ENCODE measurements at regions of chr12 and their contacts with region 1.

Region 1: GRCh38 chr12:101773650-101774162 is 34.4 kb upstream of the SYCP3 start:
- DNase-seq: peak; percentile 56
- ATAC-seq: peak; percentile 89
- H3K4me3 Mint-ChIP-seq: no peak overlapping the region
- H3K27ac Mint-ChIP-seq: no peak overlapping the region
- H3K4me1 Mint-ChIP-seq: no peaks in the 10 kb centered on the region
- H3K27me3 Mint-ChIP-seq: no peaks in the 10 kb centered on the region
- CTCF ChIP-seq: peak; percentile 89

Region 2: DNA sequence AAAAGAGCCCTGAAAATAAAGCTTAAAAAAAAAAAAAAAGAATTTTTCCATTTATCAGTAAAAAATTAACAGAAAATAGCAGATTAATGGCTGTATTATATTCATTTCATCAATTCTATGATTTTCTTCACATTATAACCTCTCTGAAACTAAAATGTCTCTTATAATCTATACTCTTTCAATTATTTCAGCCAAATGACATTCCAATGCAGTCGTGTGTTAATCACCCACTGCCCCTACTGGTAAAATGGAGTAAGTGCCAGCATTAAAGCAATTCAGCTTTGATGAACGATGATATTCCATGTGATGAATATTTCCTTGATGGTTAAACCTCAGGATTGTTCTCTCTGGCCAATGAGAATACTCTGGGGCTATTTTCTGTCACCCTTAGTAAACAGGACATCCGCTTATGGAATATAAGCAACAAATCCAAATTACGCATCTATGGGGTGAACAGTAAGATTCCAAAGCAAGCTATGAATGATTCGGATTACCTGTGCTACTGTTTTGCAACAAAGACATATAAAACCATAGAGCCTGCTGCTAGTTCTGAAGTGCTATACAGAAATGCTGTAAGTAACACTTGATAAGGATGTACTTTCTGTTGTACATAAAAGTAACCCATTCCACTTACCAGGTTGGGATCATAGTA is 14.2 kb before region 1 on chr12:
- CTCF ChIA-PET with region 1: interaction called, 20 read pairs
- POLR2A ChIA-PET with region 1: no interaction called
- DNase-seq: no peak
- ATAC-seq: peak; percentile 68; the same call in 1 of the 2 replicates
- H3K4me3 Mint-ChIP-seq: no peak overlapping the region
- H3K27ac Mint-ChIP-seq: no peak overlapping the region
- H3K4me1 Mint-ChIP-seq: peaks cover 8% of the 10 kb centered on the region
- H3K27me3 Mint-ChIP-seq: no peaks in the 10 kb centered on the region
- CTCF ChIP-seq: peak; percentile 42

Region 3: GRCh38 chr12:101823891-101824290 is 50.2 kb after region 1 on chr12:
- CTCF ChIA-PET with region 1: interaction called, 71 read pairs
- POLR2A ChIA-PET with region 1: no interaction called
- DNase-seq: peak; percentile 54
- ATAC-seq: peak; percentile 89
- H3K4me3 Mint-ChIP-seq: no peak overlapping the region
- H3K27ac Mint-ChIP-seq: peak overlapping the region; percentile 72
- H3K4me1 Mint-ChIP-seq: peaks cover 62% of the 10 kb centered on the region
- H3K27me3 Mint-ChIP-seq: no peaks in the 10 kb centered on the region
- CTCF ChIP-seq: no peak

Region 4: DNA sequence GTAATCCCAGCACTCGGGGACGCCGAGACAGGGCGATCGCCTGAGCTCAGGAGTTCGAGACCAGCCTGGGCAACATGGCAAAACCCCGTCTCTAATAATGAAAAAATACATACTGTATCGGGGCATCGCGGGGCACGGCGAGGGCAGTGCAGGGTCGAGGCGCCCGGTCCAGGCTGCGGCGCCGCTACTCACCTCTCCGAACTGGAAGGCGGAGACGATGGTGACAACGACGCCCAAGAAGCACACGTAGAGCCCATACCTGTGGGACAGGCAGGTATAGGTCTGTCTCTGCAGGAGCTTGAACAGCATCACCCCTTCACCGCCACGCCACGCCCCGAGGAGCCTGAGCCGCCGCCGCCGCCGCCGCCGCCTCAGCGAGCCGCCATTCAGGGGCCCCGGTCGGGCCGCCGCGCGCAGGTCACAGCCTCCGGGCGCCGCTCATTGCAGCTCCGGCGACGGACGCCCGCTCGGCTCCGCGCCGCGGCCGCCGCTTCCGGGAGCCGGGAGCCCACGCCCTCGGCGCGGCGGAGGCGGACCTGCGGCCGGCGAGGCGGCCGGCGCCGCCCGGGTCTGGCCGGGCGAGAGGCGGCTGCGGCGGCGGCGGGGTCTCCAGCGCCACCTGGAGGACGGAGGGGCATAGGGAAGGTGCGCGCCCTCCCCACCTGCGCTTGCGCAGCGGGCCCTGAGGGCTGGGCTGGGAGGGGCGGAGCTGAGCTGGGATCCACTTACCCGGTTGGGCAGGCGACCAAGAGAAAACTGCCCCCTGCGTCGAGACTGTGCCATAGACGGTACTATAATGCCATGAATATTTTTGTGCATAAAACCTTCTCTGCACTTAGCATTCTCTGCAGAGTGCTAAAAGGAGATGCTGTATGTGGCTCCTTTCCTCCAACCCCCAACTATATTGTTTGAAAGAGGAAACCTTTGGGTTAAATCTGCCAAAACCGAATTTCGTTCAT is 56.9 kb after region 1 on chr12 and contains the start of gene GNPTAB:
- CTCF ChIA-PET with region 1: interaction called, 71 read pairs
- POLR2A ChIA-PET with region 1: interaction called, 4 read pairs
- DNase-seq: peak; percentile 92
- ATAC-seq: peak; percentile 94
- H3K4me3 Mint-ChIP-seq: peak within 1 kb of the TSS; percentile 96
- H3K27ac Mint-ChIP-seq: peak within 1 kb of the TSS; percentile 60; the same call in 1 of the 2 replicates
- H3K4me1 Mint-ChIP-seq: peaks cover 31% of the 10 kb centered on the region
- H3K27me3 Mint-ChIP-seq: no peaks in the 10 kb centered on the region
- CTCF ChIP-seq: peak; percentile 67
- total RNA-seq, gene GNPTAB: 22.5 to 25.4 TPM (median 24.4 TPM) in 3 replicates

Region 5: DNA sequence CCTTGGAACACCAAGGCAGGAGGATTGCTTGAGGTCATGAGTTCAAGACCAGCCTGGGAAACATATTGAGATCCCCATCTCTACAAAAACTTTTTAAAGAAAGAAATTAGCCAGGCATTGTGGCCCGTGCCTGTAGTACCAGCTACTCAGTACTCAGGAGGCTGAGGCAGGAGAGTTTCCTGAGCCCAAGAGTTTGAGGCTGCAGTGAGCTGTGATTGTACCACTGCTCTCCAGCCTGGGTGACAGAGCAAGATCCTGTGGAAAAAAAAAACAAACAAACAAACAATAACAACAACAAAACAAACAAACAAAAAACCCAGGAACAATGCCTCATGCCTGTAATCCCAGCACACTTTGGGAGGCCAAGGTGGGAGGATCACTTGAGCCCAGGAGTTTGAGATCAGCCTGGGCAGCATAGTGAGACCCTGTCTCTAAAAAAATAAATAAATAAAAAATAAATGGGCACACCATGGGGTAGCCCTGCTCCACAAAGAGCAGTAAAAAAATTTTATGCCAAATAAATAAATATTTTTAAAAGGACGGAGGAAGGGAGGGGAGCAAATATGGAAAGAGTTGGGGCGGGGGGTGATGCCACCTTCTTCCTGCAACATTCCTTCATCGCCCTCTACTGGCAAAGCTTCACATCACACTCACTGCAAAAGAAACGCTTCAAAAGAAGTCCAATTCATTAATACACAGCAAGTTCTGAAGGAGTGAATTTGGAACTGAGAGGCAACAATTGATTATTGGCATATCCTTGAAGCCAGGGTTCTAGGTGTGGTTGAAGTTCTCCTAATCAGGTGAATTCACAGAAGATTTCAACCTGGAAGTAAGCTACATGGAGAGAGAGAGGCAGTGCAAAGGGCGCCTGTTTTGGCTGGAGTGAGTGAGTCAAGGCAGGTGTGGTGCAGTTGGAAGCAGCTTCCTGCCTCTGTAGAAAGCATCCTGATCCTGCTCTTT is 65.9 kb after region 1 on chr12:
- CTCF ChIA-PET with region 1: interaction called, 55 read pairs
- POLR2A ChIA-PET with region 1: no interaction called
- DNase-seq: peak; percentile 74
- ATAC-seq: peak; percentile 80
- H3K4me3 Mint-ChIP-seq: no peak overlapping the region
- H3K27ac Mint-ChIP-seq: no peak overlapping the region
- H3K4me1 Mint-ChIP-seq: no peaks in the 10 kb centered on the region
- H3K27me3 Mint-ChIP-seq: no peaks in the 10 kb centered on the region
- CTCF ChIP-seq: peak; percentile 67